H1 (cell line): ENCODE measurements at regions of chr2 and their contacts with region 1.

Region 1: GRCh38 chr2:38377050-38377828 is at the start of gene ATL2:
- DNase-seq: peak; percentile 91 to 92
- H3K4me3 ChIP-seq: peak within 1 kb of the TSS; percentile 68 to 99 (median 96)
- H3K27ac ChIP-seq: peak within 1 kb of the TSS; percentile 96
- H3K4me1 ChIP-seq: peaks cover 0 to 5% (median 4%) of the 10 kb centered on the region in 4 experiments; a peak in 3 of 7 replicates
- H3K27me3 ChIP-seq: no peaks in the 10 kb centered on the region; a peak in 1 of 7 replicates
- CTCF ChIP-seq: no peak
- EP300 ChIP-seq: peak in 1 of 2 experiments; percentile 53; a peak in 1 of 3 replicates
- POLR2A ChIP-seq: peak; percentile 88 to 89
- RAD21 ChIP-seq: peak in 1 of 2 experiments; percentile 11; a peak in 1 of 4 replicates
- total RNA-seq, gene ATL2: 82.9 and 84.6 TPM in 2 replicates

Region 2: DNA sequence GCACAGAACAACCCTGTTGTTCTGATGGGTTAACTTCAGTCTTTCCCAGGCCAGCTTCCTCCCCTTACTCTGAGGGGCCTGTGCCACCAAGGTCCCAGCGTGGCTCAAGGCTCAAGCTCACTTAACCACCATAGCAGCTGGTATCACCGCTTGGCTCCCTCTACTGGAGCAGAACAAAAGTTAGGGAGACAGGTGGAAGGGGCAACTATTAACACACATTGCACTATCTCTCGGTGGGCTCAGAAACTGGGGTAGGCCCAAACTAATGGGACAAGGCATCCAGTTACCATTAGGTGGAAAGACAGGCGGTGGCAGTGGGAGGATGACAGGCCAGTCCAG is 88.5 kb after region 1 on chr2:
- CTCF ChIA-PET with region 1: interaction called, 29 read pairs
- POLR2A ChIA-PET with region 1: interaction called, 8 read pairs
- DNase-seq: peak; percentile 33 to 56
- H3K4me3 ChIP-seq: no peak overlapping the region
- H3K27ac ChIP-seq: no peak overlapping the region
- H3K4me1 ChIP-seq: no peaks in the 10 kb centered on the region
- H3K27me3 ChIP-seq: no peaks in the 10 kb centered on the region
- CTCF ChIP-seq: peak; percentile 48 to 91 (median 80)
- EP300 ChIP-seq: no peak
- POLR2A ChIP-seq: no peak
- RAD21 ChIP-seq: peak; percentile 79 to 88

Region 3: DNA sequence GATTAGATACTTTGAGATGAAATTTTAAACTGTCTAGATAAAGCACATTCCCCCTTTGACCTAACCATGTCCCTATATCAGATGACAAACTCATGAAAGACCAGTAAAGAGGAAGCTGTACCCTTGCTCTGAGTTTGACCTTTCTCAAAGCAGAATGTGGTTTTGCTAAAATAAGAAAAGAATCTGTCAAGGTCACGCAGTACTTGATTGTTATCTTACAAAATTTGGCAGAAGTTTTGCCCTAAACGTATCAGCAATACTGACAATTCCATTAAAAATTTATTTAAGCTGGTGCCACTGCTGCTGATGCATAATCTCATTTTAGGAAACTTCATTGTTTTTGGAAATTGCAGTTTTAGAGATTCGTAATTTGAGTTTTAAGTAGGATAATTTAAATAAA is 257.4 kb after region 1 on chr2:
- CTCF ChIA-PET with region 1: no interaction called
- POLR2A ChIA-PET with region 1: no interaction called
- DNase-seq: no peak
- H3K4me3 ChIP-seq: no peak overlapping the region
- H3K27ac ChIP-seq: no peak overlapping the region
- H3K4me1 ChIP-seq: no peaks in the 10 kb centered on the region
- H3K27me3 ChIP-seq: no peaks in the 10 kb centered on the region
- CTCF ChIP-seq: no peak
- EP300 ChIP-seq: no peak
- POLR2A ChIP-seq: no peak
- RAD21 ChIP-seq: no peak